ENCODE measurements at regions of chr10 and their contacts with region 1.

Region 1: DNA sequence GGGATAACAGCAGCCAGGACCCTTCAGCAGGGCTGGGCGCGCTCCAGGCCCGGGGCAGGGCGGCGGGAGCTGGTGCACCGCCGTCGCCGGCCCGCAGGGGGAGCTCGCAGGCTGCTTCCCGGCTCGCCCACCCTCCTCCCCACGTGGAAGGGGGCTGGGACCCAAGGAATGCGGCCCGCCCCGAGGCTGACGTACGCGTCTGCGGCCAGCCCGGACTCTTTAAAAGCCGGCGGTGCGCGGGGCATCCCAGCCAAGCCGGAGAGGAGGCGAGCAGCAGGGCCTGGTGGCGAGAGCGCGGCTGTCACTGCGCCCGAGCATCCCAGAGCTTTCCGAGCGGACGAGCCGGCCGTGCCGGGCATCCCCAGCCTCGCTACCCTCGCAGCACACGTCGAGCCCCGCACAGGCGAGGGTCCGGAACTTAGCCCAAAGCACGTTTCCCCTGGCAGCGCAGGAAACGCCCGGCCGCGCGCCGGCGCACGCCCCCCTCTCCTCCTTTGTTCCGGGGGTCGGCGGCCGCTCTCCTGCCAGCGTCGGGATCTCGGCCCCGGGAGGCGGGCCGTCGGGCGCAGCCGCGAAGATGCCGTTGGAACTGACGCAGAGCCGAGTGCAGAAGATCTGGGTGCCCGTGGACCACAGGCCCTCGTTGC is at the start of gene PFKFB3:
- DNase-seq: peak; percentile 30
- ATAC-seq: peak; percentile 90
- H3K4me3 ChIP-seq: peak within 1 kb of the TSS; percentile 66 to 68
- H3K27ac ChIP-seq: peak within 1 kb of the TSS; percentile 51; the same call in 1 of the 2 replicates
- H3K4me1 ChIP-seq: peaks cover 12% of the 10 kb centered on the region
- H3K27me3 ChIP-seq: no peaks in the 10 kb centered on the region
- CTCF ChIP-seq: peak; percentile 87
- total RNA-seq, gene PFKFB3: 17.1 TPM

Region 2: DNA sequence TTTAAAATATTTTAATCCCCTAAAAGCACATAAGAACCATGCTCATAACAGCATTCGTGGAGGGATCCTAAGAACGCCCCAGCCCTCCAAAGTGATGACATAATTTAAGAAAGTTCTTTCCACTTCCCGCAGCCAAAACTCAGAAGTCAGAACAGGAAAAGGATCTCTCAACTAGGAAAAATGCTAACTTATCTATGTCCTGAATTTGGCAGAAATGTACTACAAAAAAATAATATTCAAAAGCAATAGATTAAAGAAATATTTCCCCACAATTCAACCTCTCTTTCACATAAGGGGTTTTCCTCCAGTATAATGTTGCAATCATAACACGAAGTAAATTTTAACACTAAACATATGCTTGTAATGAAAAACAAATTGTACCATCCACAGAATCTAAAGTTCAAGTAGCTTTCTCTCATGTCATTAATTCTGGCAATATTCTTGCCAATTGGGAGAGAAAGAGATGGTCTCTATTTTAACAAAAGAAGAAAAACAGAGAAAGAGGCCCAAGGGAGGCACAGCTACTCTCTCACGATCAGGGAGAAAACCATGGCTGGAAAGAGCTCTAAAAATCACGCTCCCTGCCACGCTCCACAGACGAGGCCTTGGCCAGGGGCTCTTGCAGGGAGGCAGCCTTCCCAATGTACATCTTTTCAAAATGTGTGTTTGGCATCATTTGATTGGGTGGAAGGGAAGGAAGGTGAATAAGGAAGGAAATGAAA is 559.3 kb before region 1 on chr10:
- CTCF ChIA-PET with region 1: no interaction called
- POLR2A ChIA-PET with region 1: no interaction called
- in situ Hi-C with region 1: no loop called
- intact Hi-C with region 1: no loop called
- DNase-seq: no peak
- ATAC-seq: no peak
- H3K4me3 ChIP-seq: no peak overlapping the region
- H3K27ac ChIP-seq: no peak overlapping the region
- H3K4me1 ChIP-seq: no peaks in the 10 kb centered on the region
- H3K27me3 ChIP-seq: no peaks in the 10 kb centered on the region
- CTCF ChIP-seq: no peak

Region 3: GRCh38 chr10:6144406-6145165 is 58.2 kb before region 1 on chr10:
- CTCF ChIA-PET with region 1: interaction called, 3 read pairs
- POLR2A ChIA-PET with region 1: no interaction called
- in situ Hi-C with region 1: no loop called
- intact Hi-C with region 1: loop called (anchors 5 kb)
- DNase-seq: no peak
- ATAC-seq: peak; percentile 91
- H3K4me3 ChIP-seq: peak overlapping the region; percentile 65 to 77
- H3K27ac ChIP-seq: peak overlapping the region; percentile 79
- H3K4me1 ChIP-seq: peaks cover 6% of the 10 kb centered on the region
- H3K27me3 ChIP-seq: no peaks in the 10 kb centered on the region
- CTCF ChIP-seq: no peak

Region 4: DNA sequence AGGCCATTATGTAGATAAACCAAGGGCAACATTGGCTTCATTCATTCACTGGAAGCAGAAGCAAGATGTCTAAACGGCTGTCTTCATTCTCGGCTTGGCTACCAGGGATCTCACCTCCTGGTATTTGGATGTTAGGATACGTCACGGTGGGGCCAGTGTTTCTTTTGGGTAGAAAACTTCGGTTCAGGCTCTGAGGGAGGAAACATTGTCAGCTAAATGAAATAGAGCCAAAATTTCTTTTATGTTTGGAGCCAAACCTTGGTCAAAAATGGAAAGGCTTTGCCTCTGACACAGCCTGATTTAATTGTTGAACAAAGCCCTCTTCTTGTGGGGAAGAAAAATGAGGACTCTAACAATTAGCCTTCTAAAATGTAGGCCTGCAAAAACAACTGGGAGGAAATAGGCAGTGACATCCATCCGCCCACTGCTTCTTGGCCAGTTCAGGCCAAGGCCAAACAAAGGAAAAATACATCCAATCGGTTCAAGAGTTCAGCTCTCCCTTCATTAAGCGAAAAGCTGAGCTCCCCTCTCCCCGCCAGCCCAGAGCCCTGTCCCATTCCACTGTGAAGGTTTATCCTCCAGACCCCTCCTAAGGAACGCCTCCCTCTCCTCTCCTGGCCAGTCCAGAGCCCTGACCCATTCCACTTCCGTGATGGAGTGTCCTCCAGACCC is 44.4 kb after region 1 on chr10:
- CTCF ChIA-PET with region 1: no interaction called
- POLR2A ChIA-PET with region 1: no interaction called
- in situ Hi-C with region 1: no loop called
- intact Hi-C with region 1: no loop called
- DNase-seq: no peak
- ATAC-seq: no peak
- H3K4me3 ChIP-seq: no peak overlapping the region
- H3K27ac ChIP-seq: no peak overlapping the region
- H3K4me1 ChIP-seq: no peaks in the 10 kb centered on the region
- H3K27me3 ChIP-seq: no peaks in the 10 kb centered on the region
- CTCF ChIP-seq: no peak